ENCODE measurements at regions of chr2 and their contacts with region 1.

Region 1: DNA sequence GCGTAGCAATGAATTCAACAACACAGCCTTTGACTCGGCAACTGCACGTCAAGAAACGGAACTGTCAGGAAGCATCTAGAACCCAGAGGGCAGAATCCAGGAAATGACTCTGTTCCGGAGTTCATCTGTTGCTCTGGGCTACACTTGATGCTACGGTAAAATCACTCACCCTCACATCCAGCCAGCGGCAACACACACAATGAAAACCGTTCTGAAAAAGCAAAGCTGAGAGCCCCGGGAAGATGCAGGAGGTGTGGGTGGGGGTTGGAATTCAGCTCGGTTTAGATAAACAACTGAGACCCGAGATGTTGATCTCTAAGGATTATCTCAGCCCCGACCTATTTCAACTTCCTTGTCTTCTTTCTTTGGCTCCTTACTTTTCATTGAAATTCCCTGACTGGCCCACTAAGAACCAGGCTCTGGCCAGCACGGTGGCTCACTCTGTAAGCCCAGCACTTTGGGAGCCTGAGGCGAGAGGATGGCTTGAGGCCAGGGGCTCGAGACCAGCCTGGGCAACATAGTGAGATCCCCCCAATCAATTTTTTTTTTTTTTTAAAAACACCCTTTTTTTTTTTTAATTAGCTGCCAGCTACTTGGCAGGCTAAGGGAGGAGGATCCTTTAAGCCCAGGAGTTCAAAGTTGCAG is 13.3 kb upstream of the RAB17 start:
- DNase-seq: peak; percentile 17
- ATAC-seq: peak; percentile 72
- H3K4me3 ChIP-seq: no peak overlapping the region
- H3K27ac ChIP-seq: no peak overlapping the region
- H3K4me1 ChIP-seq: 0 out of 2 replicates have a peak, but pooled peaks cover 4% of the 10 kb centered on the region
- H3K27me3 ChIP-seq: no peaks in the 10 kb centered on the region
- CTCF ChIP-seq: no peak

Region 2: DNA sequence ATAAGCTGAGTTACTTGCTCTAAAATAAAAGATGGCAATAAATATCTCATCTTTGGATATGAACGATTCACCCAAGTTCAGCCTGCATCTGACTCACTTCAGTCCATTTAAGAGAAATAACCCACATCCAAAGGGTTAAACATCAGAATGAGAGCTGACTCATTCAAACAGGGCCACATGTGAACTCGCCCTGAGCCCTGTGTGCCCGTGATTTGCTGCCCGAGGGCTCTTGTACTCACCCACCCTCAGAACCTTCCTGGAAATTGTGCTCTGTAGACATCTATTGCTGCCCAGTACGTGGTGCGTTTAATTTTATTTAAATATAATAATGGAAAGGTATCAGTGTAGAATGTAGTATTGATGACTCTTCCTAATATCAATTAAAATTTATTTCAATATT is 127.8 kb after region 1 on chr2:
- CTCF ChIA-PET with region 1: no interaction called
- POLR2A ChIA-PET with region 1: no interaction called
- intact Hi-C with region 1: loop called (anchors 10 kb)
- DNase-seq: peak; percentile 73
- ATAC-seq: peak; percentile 62
- H3K4me3 ChIP-seq: no peak overlapping the region
- H3K27ac ChIP-seq: no peak overlapping the region
- H3K4me1 ChIP-seq: peaks cover 27% of the 10 kb centered on the region
- H3K27me3 ChIP-seq: no peaks in the 10 kb centered on the region
- CTCF ChIP-seq: no peak

Region 3: GRCh38 chr2:237766340-237766739 is 162.5 kb after region 1 on chr2:
- CTCF ChIA-PET with region 1: no interaction called
- POLR2A ChIA-PET with region 1: no interaction called
- intact Hi-C with region 1: no loop called
- DNase-seq: no peak
- ATAC-seq: no peak
- H3K4me3 ChIP-seq: no peak overlapping the region
- H3K27ac ChIP-seq: no peak overlapping the region
- H3K4me1 ChIP-seq: no peaks in the 10 kb centered on the region
- H3K27me3 ChIP-seq: no peaks in the 10 kb centered on the region
- CTCF ChIP-seq: no peak

Measured in PC-3 (cell line).